ENCODE measurements at regions of chr2 and their contacts with region 1.

Region 1: GRCh38 chr2:237674731-237675276 is 47.4 kb downstream of the LRRFIP1 start:
- DNase-seq: peak; percentile 86
- ATAC-seq: peak; percentile 61
- H3K4me3 Mint-ChIP-seq: peak overlapping the region; percentile 74
- H3K27ac Mint-ChIP-seq: peak overlapping the region; percentile 90
- H3K4me1 Mint-ChIP-seq: peaks cover 49% of the 10 kb centered on the region
- H3K27me3 Mint-ChIP-seq: no peaks in the 10 kb centered on the region

Region 2: GRCh38 chr2:237434866-237435311 is 239.9 kb before region 1 on chr2:
- CTCF ChIA-PET with region 1: no interaction called
- POLR2A ChIA-PET with region 1: no interaction called
- intact Hi-C with region 1: loop called in 1 of 2 experiments (anchors 5 kb)
- DNase-seq: peak; percentile 91
- ATAC-seq: peak; percentile 38
- H3K4me3 Mint-ChIP-seq: peak overlapping the region; percentile 74
- H3K27ac Mint-ChIP-seq: peak overlapping the region; percentile 95
- H3K4me1 Mint-ChIP-seq: peaks cover 97% of the 10 kb centered on the region
- H3K27me3 Mint-ChIP-seq: no peaks in the 10 kb centered on the region

Region 3: DNA sequence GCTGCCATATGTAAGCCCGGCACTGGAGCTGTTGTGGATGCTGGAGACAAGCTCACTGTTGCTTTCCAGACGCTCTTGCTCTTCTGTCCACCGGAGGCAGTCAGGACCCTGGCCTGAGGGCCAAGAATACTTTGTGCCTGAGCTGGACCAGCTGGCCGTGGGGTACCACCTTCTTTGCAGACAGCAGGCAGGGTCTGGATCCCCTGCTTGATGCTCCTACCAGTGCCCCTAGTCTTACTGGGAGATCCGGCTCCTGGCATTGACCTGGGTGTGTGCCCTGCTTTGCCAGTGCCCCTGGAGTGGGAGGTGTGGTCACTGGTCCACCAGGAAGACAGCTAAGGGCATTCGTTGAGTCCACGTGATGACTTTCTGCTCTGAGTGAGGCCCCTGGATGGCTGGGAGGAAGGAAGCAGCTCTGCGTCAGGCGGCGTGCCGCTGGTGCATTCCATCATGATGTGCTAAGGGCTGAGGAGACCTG is 11.9 kb after region 1 on chr2:
- CTCF ChIA-PET with region 1: interaction called, 43 read pairs
- POLR2A ChIA-PET with region 1: interaction called, 35 read pairs
- intact Hi-C with region 1: loop called (anchors 1 kb)
- DNase-seq: no peak
- ATAC-seq: no peak
- H3K4me3 Mint-ChIP-seq: no peak overlapping the region
- H3K27ac Mint-ChIP-seq: peak overlapping the region; percentile 59
- H3K4me1 Mint-ChIP-seq: peaks cover 49% of the 10 kb centered on the region
- H3K27me3 Mint-ChIP-seq: no peaks in the 10 kb centered on the region

Region 4: GRCh38 chr2:237708065-237708398 is 33.2 kb after region 1 on chr2:
- CTCF ChIA-PET with region 1: interaction called, 18 read pairs
- POLR2A ChIA-PET with region 1: no interaction called
- intact Hi-C with region 1: loop called (anchors 1 kb)
- DNase-seq: peak; percentile 39
- ATAC-seq: no peak
- H3K4me3 Mint-ChIP-seq: no peak overlapping the region
- H3K27ac Mint-ChIP-seq: no peak overlapping the region
- H3K4me1 Mint-ChIP-seq: peaks cover 56% of the 10 kb centered on the region
- H3K27me3 Mint-ChIP-seq: no peaks in the 10 kb centered on the region

Region 5: DNA sequence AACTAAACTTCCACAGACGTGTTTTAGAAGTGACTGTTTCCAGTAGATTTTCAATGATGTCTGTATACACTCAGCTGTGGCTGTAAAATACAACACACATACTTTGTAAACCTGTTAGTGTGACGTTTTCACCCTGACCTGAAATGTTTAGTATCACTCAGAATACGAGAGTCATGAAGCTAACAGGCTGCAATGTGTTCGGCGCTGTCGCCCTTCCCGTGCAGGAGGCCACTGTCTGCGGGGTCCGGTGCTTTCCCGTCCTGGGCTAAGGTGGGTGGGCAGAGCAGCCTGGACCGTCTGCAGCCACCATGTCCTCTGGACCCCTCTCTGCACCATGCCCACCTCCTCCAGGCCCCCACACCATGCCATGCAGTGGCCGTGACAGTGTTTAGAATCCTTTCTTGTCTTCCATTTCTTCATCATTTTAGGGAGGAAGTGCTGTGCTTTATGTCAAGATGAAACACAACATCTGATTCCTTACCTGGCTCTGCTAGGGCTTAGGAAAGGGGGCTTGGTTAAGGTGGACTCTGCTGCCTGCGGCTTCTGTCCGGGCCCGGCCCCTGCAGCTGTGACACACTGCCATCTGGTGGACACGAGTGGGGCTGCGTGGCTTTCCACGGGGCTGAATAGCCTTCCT is 69.9 kb after region 1 on chr2:
- CTCF ChIA-PET with region 1: interaction called, 94 read pairs
- POLR2A ChIA-PET with region 1: interaction called, 12 read pairs
- intact Hi-C with region 1: loop called (anchors 1 kb)
- DNase-seq: peak; percentile 84
- ATAC-seq: peak; percentile 85
- H3K4me3 Mint-ChIP-seq: no peak overlapping the region
- H3K27ac Mint-ChIP-seq: peak overlapping the region; percentile 63
- H3K4me1 Mint-ChIP-seq: peaks cover 35% of the 10 kb centered on the region
- H3K27me3 Mint-ChIP-seq: no peaks in the 10 kb centered on the region

Measured in activated CD4-positive, alpha-beta T cell treated with anti-CD3 and anti-CD28 coated beads for 36 hours (primary cell).